ENCODE measurements at regions of chr7 and their contacts with region 1.

Region 1: DNA sequence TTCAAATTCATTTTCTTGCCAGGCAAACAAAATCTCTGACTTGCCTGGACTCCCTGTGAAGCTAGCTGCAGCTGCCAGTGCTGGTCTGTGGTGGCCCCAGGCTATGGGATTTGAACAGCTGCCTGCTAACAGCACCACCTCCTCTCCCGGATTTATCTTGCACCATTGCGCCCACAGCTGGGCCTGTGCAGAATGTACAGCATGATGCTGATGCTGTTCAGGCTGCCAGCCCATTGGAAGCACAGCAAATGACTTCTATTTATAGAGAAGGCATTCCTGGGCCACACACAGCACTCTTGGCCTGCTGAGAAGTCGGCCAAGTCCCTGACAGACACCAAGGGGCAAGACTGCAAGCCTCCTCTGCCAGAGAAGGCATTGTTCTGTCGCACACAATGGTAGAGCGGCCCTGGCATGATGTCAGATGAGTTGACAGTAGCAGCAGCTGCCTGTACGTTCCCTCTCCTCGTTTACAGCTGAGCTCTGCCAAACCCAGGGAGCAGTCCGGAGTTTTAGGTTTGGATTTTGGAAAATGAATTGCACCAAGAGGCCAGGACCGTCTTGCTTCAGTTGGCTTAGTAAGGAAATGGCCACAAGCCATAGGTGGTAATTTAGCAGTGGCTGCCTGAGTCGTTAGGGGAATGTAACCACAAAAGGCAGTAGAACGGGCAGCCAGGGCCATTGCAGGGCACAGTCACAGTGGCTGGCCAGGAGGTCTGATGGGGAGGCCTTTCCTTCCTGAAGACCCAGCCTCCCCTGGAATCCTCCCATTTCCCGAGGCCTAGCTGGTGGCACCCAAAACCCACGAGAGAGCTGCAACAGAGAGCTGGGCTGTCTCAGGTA is 38.5 kb downstream of the MTURN start:
- DNase-seq: peak; percentile 87
- ATAC-seq: peak; percentile 87

Region 2: GRCh38 chr7:30252885-30253795 is 79.9 kb after region 1 on chr7:
- intact Hi-C with region 1: loop called (anchors 10 kb)
- DNase-seq: peak; percentile 81
- ATAC-seq: peak; percentile 96

Measured in Right ventricle myocardium superior (tissue), 1 donor.